ENCODE measurements at regions of chr9 and their contacts with region 1.

Region 1: GRCh38 chr9:124802426-124802825 is 25.5 kb downstream of the OLFML2A start:
- DNase-seq: no peak

Region 2: GRCh38 chr9:124829284-124829669 is 26.9 kb after region 1 on chr9:
- intact Hi-C with region 1: loop called in 1 of 2 experiments (anchors 1 kb)
- DNase-seq: no peak